Lower leg skin (tissue), 4 donors: ENCODE measurements at regions of chr3 and their contacts with region 1.

Region 1: DNA sequence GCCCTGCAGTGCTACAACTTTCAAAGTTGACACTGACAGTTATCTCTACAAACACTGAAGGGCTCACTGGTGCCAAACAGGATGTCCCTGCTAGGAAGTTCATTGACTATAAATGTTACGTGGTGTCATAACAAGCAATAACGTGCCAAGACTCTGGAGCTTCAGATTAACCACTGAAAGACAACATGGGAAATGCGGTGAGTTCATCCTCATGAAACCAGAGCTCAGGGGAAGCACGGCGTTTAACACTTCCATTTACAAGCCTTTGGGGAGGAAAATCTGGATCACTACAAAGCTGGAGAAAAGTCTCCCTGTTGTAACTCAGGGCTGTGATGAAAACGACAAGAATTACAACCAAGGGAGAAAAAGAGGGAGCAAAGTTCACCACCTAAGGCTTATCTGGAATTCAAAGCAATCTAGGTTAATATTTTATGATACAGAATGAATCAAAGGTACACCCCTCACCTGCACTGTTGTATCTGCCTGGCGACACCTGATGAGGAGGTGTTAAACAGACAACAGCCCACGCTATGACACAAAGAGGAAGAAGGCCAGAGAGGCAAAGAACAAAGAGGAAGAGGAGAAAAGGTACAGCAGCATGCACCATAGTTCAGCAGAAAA is 27.0 kb downstream of the SHQ1 start:
- DNase-seq: peak in 1 of 2 donors; percentile 20
- H3K4me3 ChIP-seq: no peak overlapping the region
- CTCF ChIP-seq: no peak
- POLR2A ChIP-seq: no peak

Region 2: DNA sequence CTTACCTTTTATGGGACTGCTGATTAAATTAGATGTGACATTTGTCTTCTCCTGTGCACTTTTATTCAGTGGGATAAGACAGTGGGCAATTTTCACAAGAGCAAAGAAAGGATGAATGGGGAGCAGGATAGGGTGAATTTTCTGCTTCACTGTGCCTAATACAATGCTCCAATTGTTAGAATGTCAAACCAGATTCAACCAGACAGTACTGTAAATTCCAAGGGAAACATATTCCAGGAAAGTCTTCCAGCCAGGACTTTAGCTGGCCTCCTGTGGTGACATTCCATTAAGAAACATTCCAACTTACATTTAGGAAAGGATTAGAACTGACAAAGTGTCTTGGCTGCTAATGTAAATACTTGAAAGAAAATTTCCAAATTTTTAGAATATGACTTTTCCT is 936.3 kb before region 1 on chr3:
- intact Hi-C with region 1: loop called (anchors 10 kb)
- DNase-seq: no peak
- H3K4me3 ChIP-seq: no peak overlapping the region
- CTCF ChIP-seq: no peak
- POLR2A ChIP-seq: no peak

Region 3: DNA sequence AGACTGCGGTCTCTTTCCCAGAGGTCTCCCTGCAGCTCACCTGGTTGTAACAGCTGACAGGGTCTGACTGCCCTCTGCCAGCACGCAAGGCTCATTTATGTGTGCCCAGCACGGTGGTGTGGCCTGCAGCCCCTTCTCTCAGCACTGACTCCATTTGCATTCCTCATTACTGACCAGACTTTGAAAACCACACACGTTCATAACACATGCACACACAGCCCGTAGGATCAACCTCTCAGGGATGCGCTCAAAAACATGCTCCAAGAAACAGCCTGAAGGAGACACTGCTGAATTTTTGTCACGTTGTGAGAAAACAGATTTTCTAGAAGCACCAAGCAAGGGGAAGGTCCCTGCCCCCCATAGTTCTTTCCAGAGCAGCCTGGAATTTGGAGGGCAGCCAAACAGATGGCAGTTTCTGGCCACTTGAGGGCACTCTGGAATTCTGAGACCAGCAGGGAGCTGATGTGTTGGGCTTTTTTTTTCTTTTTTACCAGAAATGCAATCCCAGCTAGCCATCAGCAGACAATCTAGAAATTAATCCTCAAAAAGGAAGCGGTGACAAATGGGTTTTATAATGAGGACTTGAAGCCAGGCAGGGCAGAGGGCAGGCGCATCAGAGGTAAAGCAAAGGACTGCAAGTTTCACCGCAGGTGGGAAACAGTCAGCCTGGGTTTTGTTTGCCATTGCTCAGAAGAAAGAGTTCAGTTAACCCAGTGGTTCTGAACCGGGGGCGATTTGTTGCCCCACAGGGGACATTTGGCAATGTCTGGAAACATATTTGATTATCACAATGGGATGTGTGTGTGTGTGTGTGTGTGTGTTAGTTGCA is 865.8 kb before region 1 on chr3:
- intact Hi-C with region 1: loop called (anchors 10 kb)
- DNase-seq: peak; percentile 63 to 89
- H3K4me3 ChIP-seq: no peak overlapping the region
- CTCF ChIP-seq: no peak
- POLR2A ChIP-seq: no peak

Region 4: GRCh38 chr3:72299321-72299802 is 521.9 kb before region 1 on chr3:
- intact Hi-C with region 1: no loop called
- DNase-seq: no peak
- H3K4me3 ChIP-seq: no peak overlapping the region
- CTCF ChIP-seq: no peak
- POLR2A ChIP-seq: no peak

Region 5: GRCh38 chr3:72702390-72702789 is 118.9 kb before region 1 on chr3:
- intact Hi-C with region 1: no loop called
- DNase-seq: peak in 1 of 2 donors; percentile 25
- H3K4me3 ChIP-seq: no peak overlapping the region
- CTCF ChIP-seq: no peak
- POLR2A ChIP-seq: no peak

Region 6: GRCh38 chr3:72810659-72811434 is 10.4 kb before region 1 on chr3:
- intact Hi-C with region 1: no loop called
- DNase-seq: no peak
- H3K4me3 ChIP-seq: no peak overlapping the region
- CTCF ChIP-seq: no peak
- POLR2A ChIP-seq: no peak